Left cardiac atrium (tissue), 4 donors: ENCODE measurements at regions of chr11 and their contacts with region 1.

Region 1: DNA sequence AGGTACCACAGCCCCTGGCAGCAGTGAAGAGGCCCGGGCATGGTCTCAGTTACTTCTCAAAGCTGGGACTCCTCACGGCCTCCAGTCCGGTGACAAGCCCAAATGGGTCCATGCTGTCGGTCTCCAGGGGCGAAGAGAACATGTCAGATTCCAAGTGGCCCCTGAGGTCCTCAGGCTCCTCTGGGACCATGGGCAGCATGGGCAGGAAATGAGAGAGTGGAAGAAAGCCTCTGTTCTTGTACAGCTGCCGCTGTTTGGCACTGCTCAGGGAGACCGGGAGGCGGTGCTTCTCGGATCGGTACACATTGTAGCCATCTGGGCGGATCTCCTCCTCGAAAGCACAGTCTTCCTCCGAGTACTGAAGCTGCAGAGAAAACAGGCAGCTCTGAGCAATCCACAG is 4.6 kb downstream of the FGF19 start:
- DNase-seq: no peak
- ATAC-seq: peak in 1 of 2 donors; percentile 38

Region 2: DNA sequence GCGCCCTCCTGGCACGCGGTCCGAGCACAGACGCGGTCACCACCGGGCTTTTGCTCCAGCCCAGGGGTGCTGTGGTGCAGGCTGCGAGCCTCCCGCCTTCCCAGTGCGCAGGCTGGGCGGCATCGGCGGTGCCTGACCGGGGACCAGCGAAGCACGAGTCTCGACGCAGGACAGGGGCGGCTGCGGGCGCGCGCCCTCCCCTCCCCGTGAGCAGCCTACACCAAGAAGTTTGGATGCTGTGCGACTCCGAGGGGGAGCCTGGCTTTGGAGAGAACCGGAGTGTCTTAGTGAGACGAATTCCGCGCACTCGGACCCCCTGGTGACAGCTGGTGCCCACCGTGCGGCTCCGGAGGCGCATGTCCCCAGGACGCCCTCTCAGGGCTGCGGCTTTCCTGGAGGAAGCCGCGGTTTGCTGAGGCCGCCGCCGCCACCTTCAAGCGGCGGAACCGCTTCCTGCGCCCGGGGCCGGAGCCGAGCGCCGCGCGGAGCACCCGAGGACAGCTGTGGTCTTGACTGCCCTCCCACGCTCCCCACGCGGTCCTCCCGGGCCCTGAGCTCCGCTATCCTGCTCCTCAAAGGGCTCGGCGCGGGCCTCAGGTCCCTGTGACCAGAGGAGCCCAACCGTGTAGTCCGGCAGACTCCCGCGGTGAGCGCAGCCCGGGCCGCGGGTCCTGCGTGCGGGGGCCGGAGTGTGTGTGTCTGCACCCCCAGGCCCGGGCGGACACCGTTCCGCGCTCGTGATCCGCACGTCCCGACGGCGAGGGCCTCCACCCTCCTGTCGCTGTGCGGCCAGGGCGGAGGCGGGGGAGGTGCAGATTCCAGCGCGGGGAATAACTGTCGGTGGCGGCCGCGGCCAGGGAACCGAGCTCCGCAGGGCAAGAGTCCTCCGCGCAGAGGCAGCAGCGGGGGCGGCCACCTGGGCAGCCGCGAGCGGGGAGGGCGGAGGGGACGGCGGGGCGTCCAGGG is 118.3 kb after region 1 on chr11:
- intact Hi-C with region 1: loop called in 1 of 2 experiments (anchors 10 kb)
- DNase-seq: no peak
- ATAC-seq: no peak